Activated T-helper 1 cell treated with anti-CD3 and anti-CD28 coated beads, Interleukin-12 subunit alpha, Interleukin-12 subunit beta, Interleukin-2, Interleukin-4 antibody, amounts not matched to agents 30 ng/mL and 10 ng/mL and 1 ng/mL, durations not matched to agents 14 hours and 24 hours and 36 hours (primary cell): ENCODE measurements at regions of chr12 and their contacts with region 1.

Region 1: DNA sequence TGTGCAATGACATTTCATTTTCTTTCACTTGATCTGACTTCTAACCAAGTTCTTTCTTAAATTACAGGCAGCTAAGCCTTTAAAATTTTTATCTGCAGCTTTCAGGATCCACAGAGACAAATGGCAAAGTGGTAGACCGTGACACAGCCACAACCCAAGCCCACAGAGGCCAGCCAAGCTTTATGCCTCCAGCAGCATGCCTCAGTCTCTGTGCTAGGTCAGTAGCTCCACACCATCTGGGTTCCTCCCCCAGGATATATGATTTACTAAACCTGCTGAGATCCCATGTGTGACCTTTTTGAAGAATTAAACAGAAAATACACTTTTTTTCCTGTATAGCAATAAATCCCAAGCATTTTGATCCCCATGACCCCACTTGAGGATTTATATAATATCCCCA is 290.4 kb upstream of the CAND1 start:
- DNase-seq: no peak
- H3K4me3 Mint-ChIP-seq: no peak overlapping the region
- H3K27ac Mint-ChIP-seq: no peak overlapping the region
- H3K4me1 Mint-ChIP-seq: no peaks in the 10 kb centered on the region
- H3K27me3 Mint-ChIP-seq: peaks cover 17% of the 10 kb centered on the region

Region 2: DNA sequence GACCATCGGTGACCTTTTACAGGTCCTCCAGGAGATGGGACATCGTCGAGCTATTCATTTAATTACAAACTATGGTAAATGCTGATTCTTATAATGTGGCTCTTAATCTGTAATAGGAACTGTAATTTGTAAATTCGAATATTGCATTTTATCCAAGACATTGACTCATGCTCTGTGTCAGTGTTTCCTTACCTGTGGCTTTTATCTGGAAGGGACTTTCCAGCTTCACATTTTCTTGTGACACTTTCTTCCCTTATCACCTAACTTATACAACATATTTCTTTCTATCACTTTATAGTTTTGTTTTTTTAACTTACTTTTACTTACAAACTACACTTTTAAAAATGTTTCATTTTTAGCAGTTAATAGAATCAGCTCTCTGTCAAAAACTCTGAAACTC is 775.0 kb before region 1 on chr12:
- intact Hi-C with region 1: no loop called
- DNase-seq: no peak
- H3K4me3 Mint-ChIP-seq: no peak overlapping the region
- H3K27ac Mint-ChIP-seq: peak overlapping the region; percentile 81
- H3K4me1 Mint-ChIP-seq: peaks cover 21% of the 10 kb centered on the region
- H3K27me3 Mint-ChIP-seq: peaks cover 7% of the 10 kb centered on the region

Region 3: DNA sequence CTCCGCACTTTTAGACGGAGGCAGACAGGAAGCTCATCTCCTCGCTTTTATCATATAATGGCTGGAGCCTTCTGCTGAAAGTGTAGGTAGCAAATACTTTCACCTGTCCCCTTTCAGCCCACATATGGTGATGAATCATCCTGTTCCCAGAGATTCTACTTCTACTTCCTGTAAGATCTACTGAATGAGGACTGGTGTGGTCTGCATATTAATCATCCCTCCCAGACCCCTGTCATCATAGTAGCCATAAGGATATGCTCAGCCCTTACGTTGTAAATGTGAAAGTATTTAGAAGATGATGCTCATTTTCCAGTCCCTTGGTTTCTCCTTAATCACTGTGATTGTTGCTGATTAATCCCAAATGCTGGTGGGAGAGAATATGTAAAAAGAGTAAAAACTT is 31.7 kb before region 1 on chr12:
- intact Hi-C with region 1: loop called (anchors 1 kb)
- DNase-seq: no peak
- H3K4me3 Mint-ChIP-seq: no peak overlapping the region
- H3K27ac Mint-ChIP-seq: no peak overlapping the region
- H3K4me1 Mint-ChIP-seq: no peaks in the 10 kb centered on the region
- H3K27me3 Mint-ChIP-seq: peaks cover 5% of the 10 kb centered on the region

Region 4: GRCh38 chr12:66964629-66965028 is 14.2 kb before region 1 on chr12:
- intact Hi-C with region 1: loop called (anchors 1 kb)
- DNase-seq: peak; percentile 11
- H3K4me3 Mint-ChIP-seq: no peak overlapping the region
- H3K27ac Mint-ChIP-seq: peak overlapping the region; percentile 74
- H3K4me1 Mint-ChIP-seq: peaks cover 7% of the 10 kb centered on the region
- H3K27me3 Mint-ChIP-seq: peaks cover 9% of the 10 kb centered on the region